ENCODE measurements at regions of chr3 and their contacts with region 1.

Region 1: GRCh38 chr3:139434764-139435307 is 41.5 kb downstream of the RBP2 start:
- DNase-seq: peak in 1 of 2 donors; percentile 54
- H3K4me3 ChIP-seq: no peak overlapping the region
- CTCF ChIP-seq: no peak
- POLR2A ChIP-seq: no peak

Region 2: GRCh38 chr3:139329345-139329850 is 105.4 kb before region 1 on chr3:
- intact Hi-C with region 1: no loop called
- DNase-seq: peak; percentile 77 to 97
- H3K4me3 ChIP-seq: no peak overlapping the region
- CTCF ChIP-seq: peak in 1 of 3 donors; percentile 95
- POLR2A ChIP-seq: no peak

Region 3: DNA sequence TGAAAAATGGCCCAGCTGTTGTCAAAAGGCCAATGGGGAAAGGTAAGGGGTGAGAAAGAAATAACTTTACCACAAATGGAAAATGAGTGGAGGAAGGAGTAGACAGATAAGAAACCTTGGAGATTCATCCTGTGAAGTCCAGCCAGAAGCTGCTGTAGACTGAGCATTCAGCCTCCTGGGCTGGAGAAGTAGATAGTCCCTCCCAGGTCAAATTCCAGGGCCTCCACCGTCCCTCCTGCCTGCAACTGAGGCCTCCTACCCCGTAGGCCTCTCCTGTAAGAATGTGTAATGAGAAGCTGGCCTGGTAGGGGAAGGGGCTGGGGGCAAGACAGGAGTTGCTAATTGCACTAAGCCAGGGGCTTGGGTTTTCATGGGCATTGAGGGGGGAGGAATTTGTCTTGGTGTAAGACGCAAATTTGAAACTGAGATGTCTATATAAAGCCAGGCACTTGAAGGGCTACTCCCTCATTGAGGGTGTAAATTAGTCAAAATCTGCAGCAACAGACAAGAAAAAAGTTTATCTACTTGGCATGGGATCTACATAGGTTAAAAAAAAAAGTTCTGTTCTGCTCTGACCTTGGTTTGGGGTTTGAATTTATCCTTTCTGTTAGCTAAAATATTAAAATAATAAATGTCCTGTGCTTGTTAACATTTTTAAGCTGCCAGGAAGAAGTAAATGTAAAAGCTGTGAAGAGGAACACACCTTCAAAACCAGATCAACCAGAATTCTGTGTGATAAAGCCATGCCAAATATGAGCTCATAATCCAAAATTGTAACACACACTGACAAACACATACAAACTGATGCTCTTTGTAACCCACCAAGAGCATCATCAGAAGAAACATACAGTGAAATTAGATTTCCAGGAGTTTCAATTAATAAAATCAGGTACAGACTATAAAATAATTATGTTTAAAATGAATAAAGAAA is 43.1 kb after region 1 on chr3:
- intact Hi-C with region 1: no loop called
- DNase-seq: no peak
- H3K4me3 ChIP-seq: no peak overlapping the region
- CTCF ChIP-seq: no peak
- POLR2A ChIP-seq: no peak

Region 4: GRCh38 chr3:139561959-139562676 is 127.3 kb after region 1 on chr3:
- intact Hi-C with region 1: loop called (anchors 5 kb)
- DNase-seq: no peak
- H3K4me3 ChIP-seq: no peak overlapping the region
- CTCF ChIP-seq: no peak
- POLR2A ChIP-seq: no peak